B cell (primary cell): ENCODE measurements at regions of chr19 and their contacts with region 1.

Region 1: DNA sequence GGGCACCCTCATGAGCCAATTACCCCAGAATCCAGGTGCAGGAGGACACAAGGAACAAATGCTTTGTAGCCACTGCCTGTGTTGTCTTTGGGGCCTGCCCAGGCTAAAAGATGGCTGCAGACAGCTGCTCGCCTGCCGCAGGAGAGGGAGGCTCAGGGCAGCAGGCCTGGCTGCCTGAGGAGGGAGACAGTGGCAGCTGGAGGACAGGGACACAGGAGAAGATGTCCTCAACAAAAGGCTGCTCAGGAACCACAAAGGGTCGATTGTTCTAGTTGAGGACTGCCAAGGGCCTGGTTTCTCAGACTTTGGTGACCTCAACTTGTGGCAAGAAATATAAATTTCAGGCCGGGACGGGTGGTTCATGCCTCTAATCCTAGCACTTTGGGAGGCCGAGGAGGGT is 7.6 kb downstream of the SIRT2 start:
- DNase-seq: no peak
- ATAC-seq: no peak
- H3K4me3 ChIP-seq: no peak overlapping the region
- H3K4me3 Mint-ChIP-seq: no peak overlapping the region
- H3K27ac ChIP-seq: no peak overlapping the region
- H3K27ac Mint-ChIP-seq: no peak overlapping the region
- H3K4me1 ChIP-seq: peaks cover 3 to 11% of the 10 kb centered on the region in 2 donors
- H3K4me1 Mint-ChIP-seq: peaks cover 4% of the 10 kb centered on the region
- H3K27me3 ChIP-seq: no peaks in the 10 kb centered on the region
- H3K27me3 Mint-ChIP-seq: no peaks in the 10 kb centered on the region
- CTCF ChIP-seq: no peak

Region 2: DNA sequence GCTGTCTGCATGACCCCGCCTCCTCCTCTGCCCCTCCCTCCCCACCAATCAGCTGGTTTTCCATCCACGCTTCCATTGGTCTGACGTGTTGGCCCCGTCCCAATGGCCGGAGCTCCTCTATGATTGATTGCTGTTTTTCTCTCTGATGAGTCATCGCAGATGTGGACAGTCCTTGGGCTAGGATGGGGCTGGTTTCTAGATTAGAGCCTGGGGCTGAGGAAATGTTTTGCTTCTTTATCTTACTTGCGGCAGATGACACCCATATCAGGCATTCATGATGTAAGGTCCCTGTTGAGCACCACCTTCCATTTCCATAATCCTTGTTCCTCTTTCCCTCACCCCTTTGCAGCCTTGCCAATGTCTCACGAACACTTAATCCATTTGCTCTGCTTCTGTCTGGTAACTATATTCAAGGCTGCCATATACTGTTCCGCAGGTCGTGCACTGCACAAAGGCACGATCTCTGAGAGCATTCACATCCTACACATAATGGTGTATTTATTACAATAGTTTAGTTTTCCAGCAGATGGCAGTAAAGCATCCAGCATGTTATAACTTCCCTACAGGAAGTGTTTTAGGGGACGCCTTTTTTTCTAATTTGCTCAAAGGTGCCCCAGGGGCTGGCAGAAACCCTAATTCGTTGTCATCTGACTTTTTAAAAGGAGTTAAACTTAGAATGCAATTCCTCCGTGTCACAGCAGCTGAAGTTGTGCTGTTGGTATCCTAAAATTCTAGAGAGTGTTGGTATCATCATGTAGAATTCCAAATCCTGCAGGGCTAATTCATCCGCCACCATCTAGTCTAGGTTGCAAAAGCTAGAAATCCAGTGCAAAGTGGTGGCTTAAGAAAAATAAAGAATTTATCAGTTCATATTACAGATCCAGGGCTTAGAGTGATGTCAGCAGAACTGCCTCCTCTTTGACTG is 347.5 kb before region 1 on chr19:
- CTCF ChIA-PET with region 1: interaction called, 13 read pairs
- POLR2A ChIA-PET with region 1: no interaction called
- intact Hi-C with region 1: no loop called
- DNase-seq: peak; percentile 78
- ATAC-seq: peak; percentile 81
- H3K4me3 ChIP-seq: peak overlapping the region in 1 of 5 experiments; percentile 38
- H3K4me3 Mint-ChIP-seq: no peak overlapping the region
- H3K27ac ChIP-seq: no peak overlapping the region
- H3K27ac Mint-ChIP-seq: peak overlapping the region; percentile 27
- H3K4me1 ChIP-seq: peaks cover 14 to 27% of the 10 kb centered on the region in 2 donors
- H3K4me1 Mint-ChIP-seq: peaks cover 21% of the 10 kb centered on the region
- H3K27me3 ChIP-seq: peaks cover 0 to 4% (median 0%) of the 10 kb centered on the region in 4 experiments
- H3K27me3 Mint-ChIP-seq: no peaks in the 10 kb centered on the region
- CTCF ChIP-seq: peak; percentile 76

Region 3: GRCh38 chr19:38729653-38730469 is 161.9 kb before region 1 on chr19:
- CTCF ChIA-PET with region 1: interaction called, 9 read pairs
- POLR2A ChIA-PET with region 1: interaction called, 5 read pairs
- intact Hi-C with region 1: loop called (anchors 1 kb)
- DNase-seq: peak; percentile 84
- ATAC-seq: peak; percentile 68
- H3K4me3 ChIP-seq: no peak overlapping the region
- H3K4me3 Mint-ChIP-seq: no peak overlapping the region
- H3K27ac ChIP-seq: no peak overlapping the region
- H3K27ac Mint-ChIP-seq: peak overlapping the region; percentile 39
- H3K4me1 ChIP-seq: peaks cover 16 to 23% of the 10 kb centered on the region in 2 donors
- H3K4me1 Mint-ChIP-seq: peaks cover 23% of the 10 kb centered on the region
- H3K27me3 ChIP-seq: no peaks in the 10 kb centered on the region
- H3K27me3 Mint-ChIP-seq: no peaks in the 10 kb centered on the region
- CTCF ChIP-seq: peak; percentile 85

Region 4: GRCh38 chr19:38769635-38770211 is 122.0 kb before region 1 on chr19:
- CTCF ChIA-PET with region 1: interaction called, 24 read pairs
- POLR2A ChIA-PET with region 1: interaction called, 3 read pairs
- intact Hi-C with region 1: no loop called
- DNase-seq: peak; percentile 95
- ATAC-seq: peak; percentile 91
- H3K4me3 ChIP-seq: peak overlapping the region in 4 of 5 experiments; percentile 40 to 59 (median 47)
- H3K4me3 Mint-ChIP-seq: peak overlapping the region; percentile 81
- H3K27ac ChIP-seq: peak overlapping the region; percentile 75 to 77
- H3K27ac Mint-ChIP-seq: peak overlapping the region; percentile 89
- H3K4me1 ChIP-seq: peaks cover 6 to 12% of the 10 kb centered on the region in 2 donors
- H3K4me1 Mint-ChIP-seq: peaks cover 11% of the 10 kb centered on the region
- H3K27me3 ChIP-seq: no peaks in the 10 kb centered on the region
- H3K27me3 Mint-ChIP-seq: no peaks in the 10 kb centered on the region
- CTCF ChIP-seq: peak; percentile 86

Region 5: DNA sequence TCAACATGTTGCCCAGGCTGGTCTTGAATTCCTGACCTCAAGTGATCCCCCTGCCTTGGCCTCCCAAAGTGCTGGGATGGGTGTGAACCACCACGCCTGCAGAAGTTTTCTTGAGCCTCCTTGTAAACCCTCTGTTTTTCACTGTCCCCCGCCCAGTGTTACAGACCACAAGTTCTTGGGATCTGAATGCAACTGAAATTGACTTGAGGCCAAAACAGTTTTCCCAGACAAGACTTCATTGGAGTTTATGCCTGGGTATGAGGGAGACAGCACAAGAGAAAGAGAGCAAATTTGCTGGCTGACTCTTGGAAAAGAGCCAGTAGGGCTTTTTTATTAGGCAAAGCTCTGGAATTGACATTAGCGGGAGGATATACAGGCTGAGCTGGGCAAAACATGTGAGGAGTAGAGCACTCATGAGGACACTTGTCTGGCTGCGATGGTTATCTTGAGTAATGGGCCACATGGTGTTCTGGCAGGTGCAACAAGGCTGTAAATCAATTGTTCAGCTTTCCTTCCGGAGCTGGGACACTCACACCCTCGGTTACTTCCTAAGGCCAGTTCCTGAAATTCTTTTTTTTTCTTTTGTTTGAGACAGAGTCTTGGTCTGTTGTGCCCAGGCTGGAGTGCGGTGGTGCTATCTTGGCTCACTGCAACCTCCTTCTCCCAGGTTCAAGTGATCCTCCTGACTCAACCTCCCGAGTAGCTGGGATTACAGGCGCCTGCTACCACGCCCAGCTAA is 29.3 kb before region 1 on chr19:
- CTCF ChIA-PET with region 1: interaction called, 13 read pairs
- POLR2A ChIA-PET with region 1: interaction called, 3 read pairs
- intact Hi-C with region 1: no loop called
- DNase-seq: no peak
- ATAC-seq: no peak
- H3K4me3 ChIP-seq: no peak overlapping the region
- H3K4me3 Mint-ChIP-seq: peak overlapping the region; percentile 24
- H3K27ac ChIP-seq: peak overlapping the region; percentile 24 to 55
- H3K27ac Mint-ChIP-seq: peak overlapping the region; percentile 82
- H3K4me1 ChIP-seq: peaks cover 66 to 93% of the 10 kb centered on the region in 2 donors
- H3K4me1 Mint-ChIP-seq: peaks cover 65% of the 10 kb centered on the region
- H3K27me3 ChIP-seq: no peaks in the 10 kb centered on the region
- H3K27me3 Mint-ChIP-seq: no peaks in the 10 kb centered on the region
- CTCF ChIP-seq: no peak

Region 6: DNA sequence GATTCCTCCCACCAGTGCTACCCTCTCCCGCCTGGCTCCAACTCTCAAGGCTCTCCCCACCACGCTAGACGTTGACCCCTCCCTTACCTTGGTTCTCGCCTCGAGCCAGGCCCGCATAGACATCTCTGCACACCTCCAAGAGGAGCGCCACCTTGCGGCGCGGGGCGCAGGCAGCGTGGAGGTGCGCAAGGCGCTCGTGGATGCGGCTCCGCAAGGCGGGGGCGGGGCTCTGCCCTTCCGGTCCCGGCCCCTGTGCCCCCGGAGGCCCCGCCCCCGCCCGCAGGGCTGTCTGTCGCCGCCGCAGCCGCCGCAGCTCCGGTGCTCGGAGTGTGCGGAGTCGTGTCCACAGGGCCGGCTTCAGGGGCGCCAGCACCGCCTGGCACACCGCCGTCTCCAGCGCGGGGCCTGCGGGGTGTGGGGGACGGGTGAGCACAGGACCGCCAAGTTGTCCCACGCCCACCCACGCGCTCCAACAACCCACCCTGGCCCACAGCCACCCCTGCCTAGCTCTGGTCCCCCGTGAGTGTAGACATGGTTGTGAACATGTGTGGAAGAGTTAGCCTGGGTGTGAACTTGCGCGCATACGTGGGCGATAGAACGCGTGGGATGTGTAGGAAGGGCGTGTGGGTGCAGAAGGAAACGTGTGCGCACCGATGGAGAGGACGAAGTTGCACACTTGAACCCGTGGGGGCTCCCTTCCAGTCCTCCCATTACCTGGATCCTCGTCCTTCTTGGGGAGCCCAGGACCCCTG is 21.7 kb before region 1 on chr19:
- CTCF ChIA-PET with region 1: interaction called, 43 read pairs
- POLR2A ChIA-PET with region 1: interaction called, 3 read pairs
- intact Hi-C with region 1: loop called (anchors 2 kb)
- DNase-seq: peak; percentile 97
- ATAC-seq: peak; percentile 87
- H3K4me3 ChIP-seq: peak overlapping the region; percentile 70 to 97 (median 86)
- H3K4me3 Mint-ChIP-seq: peak overlapping the region; percentile 95
- H3K27ac ChIP-seq: peak overlapping the region; percentile 72 to 76
- H3K27ac Mint-ChIP-seq: peak overlapping the region; percentile 92
- H3K4me1 ChIP-seq: peaks cover 39 to 53% of the 10 kb centered on the region in 2 donors
- H3K4me1 Mint-ChIP-seq: peaks cover 54% of the 10 kb centered on the region
- H3K27me3 ChIP-seq: no peaks in the 10 kb centered on the region
- H3K27me3 Mint-ChIP-seq: no peaks in the 10 kb centered on the region
- CTCF ChIP-seq: peak; percentile 86

Region 7: GRCh38 chr19:38877781-38878574 is 13.8 kb before region 1 on chr19 and contains the start of gene RINL:
- CTCF ChIA-PET with region 1: interaction called, 43 read pairs
- POLR2A ChIA-PET with region 1: interaction called, 3 read pairs
- intact Hi-C with region 1: loop called (anchors 1 kb)
- DNase-seq: peak; percentile 85
- ATAC-seq: peak; percentile 93
- H3K4me3 ChIP-seq: peak within 1 kb of the TSS; percentile 36 to 73 (median 46)
- H3K4me3 Mint-ChIP-seq: peak within 1 kb of the TSS; percentile 94
- H3K27ac ChIP-seq: peak within 1 kb of the TSS; percentile 94 to 98
- H3K27ac Mint-ChIP-seq: peak within 1 kb of the TSS; percentile 100
- H3K4me1 ChIP-seq: peaks cover 31 to 37% of the 10 kb centered on the region in 2 donors
- H3K4me1 Mint-ChIP-seq: peaks cover 41% of the 10 kb centered on the region
- H3K27me3 ChIP-seq: no peaks in the 10 kb centered on the region
- H3K27me3 Mint-ChIP-seq: no peaks in the 10 kb centered on the region
- CTCF ChIP-seq: no peak
- total RNA-seq, gene RINL: 66.2 and 67.0 TPM in 2 replicates